Endothelial cell of umbilical vein (primary cell): ENCODE measurements at regions of chr17 and their contacts with region 1.

Region 1: DNA sequence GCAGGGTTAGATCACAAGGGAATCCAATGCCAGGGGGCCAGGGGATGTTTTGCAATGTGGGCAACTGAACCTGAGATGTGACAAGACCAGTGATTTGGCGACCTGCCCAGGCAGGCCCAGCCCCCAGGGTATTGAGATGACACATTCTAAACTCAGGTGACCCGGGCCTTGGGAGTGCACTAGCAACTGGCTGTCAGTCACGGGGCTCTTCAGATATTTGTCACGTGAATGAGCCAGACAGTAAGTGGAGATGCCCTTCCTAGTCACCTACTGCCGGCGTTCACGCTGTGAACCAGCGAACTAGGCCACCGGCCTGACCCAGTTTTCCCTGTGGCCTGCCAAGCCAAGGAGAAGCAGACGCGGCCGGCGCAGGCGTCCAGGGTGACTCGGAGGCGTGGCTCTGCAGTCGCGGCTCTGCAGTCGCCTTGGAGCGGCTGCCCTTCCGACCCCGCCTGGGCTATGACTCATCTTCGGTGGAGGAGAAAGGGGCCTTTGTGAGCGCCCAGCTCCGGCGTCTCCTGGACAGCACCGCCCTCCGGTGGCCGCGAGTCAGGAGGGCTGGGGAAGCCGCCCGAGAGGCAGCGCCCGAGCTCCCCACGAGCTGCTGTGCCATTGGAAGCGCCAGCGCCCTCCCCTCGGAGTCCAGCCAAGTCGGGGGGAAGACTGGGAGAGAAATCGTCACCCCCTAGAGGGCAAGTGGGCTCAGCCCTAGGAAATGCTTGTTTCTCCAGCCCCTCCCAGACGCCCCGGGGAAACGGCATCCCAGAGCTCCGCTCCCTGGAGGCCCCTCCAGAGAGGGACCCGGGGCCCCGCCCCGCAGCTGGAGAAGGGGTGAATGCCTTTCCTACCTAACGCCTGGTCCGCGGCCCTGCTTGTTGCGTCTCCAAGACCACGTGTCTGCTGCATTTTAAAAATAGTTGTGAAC is 38.8 kb downstream of the WSB1 start:
- DNase-seq: peak; percentile 98
- H3K4me3 ChIP-seq: peak overlapping the region; percentile 3 to 65 (median 17)
- H3K27ac ChIP-seq: peak overlapping the region; percentile 78
- H3K4me1 ChIP-seq: peaks cover 16% of the 10 kb centered on the region
- H3K27me3 ChIP-seq: no peaks in the 10 kb centered on the region
- CTCF ChIP-seq: peak; percentile 91 to 97
- POLR2A ChIP-seq: peak; percentile 39

Region 2: GRCh38 chr17:27199948-27200347 is 132.8 kb before region 1 on chr17:
- CTCF ChIA-PET with region 1: interaction called, 31 read pairs
- POLR2A ChIA-PET with region 1: no interaction called
- dilution Hi-C with region 1: no loop called
- intact Hi-C with region 1: loop called (anchors 2 kb)
- DNase-seq: peak; percentile 10
- H3K4me3 ChIP-seq: no peak overlapping the region
- H3K27ac ChIP-seq: no peak overlapping the region
- H3K4me1 ChIP-seq: peaks cover 5% of the 10 kb centered on the region
- H3K27me3 ChIP-seq: no peaks in the 10 kb centered on the region
- CTCF ChIP-seq: no peak
- POLR2A ChIP-seq: no peak

Region 3: GRCh38 chr17:27306276-27306835 is 26.4 kb before region 1 on chr17:
- CTCF ChIA-PET with region 1: interaction called, 12 read pairs
- POLR2A ChIA-PET with region 1: no interaction called
- dilution Hi-C with region 1: no loop called
- intact Hi-C with region 1: no loop called
- DNase-seq: no peak
- H3K4me3 ChIP-seq: no peak overlapping the region
- H3K27ac ChIP-seq: no peak overlapping the region
- H3K4me1 ChIP-seq: peaks cover 4% of the 10 kb centered on the region
- H3K27me3 ChIP-seq: no peaks in the 10 kb centered on the region
- CTCF ChIP-seq: no peak
- POLR2A ChIP-seq: no peak

Region 4: DNA sequence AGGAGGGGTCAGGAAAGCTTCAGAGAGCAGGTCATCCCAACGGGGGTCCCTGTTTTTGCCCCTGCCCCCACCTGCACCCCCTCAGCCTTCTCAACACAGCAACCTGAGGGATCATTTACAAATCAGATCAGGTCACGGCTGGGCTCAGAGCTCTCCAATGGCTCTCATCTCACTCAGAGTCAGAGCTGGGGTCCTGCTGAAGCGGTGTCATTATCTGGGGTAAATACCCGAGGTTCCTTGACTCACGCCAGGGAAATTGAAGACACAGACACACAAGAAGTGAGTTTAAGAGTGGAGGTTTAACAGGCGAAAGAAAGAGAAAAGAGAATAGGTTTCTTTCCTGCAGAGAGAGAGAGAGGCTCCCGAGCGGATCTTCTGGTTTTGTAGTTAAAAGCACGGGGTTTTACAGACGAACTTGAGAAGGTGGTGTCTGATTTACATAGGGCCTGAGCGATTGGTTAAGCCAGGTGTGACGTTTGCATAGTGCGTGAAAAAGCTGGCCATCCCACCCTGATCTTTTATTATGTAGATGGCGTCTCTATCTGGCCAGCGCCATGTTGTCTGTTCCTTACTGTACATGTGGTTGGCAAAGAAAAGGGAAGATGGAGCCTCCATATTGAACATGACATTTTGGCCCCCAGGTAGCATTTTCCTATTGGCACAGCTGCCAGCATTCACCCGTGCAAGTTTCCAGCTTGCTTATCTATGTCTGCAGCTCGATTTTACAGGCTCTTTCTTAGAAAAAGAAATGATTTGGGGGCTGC is 12.6 kb after region 1 on chr17:
- CTCF ChIA-PET with region 1: interaction called, 20 read pairs
- POLR2A ChIA-PET with region 1: no interaction called
- dilution Hi-C with region 1: no loop called
- intact Hi-C with region 1: loop called (anchors 1 kb)
- DNase-seq: no peak
- H3K4me3 ChIP-seq: no peak overlapping the region
- H3K27ac ChIP-seq: peak overlapping the region; percentile 55
- H3K4me1 ChIP-seq: peaks cover 44% of the 10 kb centered on the region
- H3K27me3 ChIP-seq: no peaks in the 10 kb centered on the region
- CTCF ChIP-seq: no peak
- POLR2A ChIP-seq: no peak